Ovary (tissue), 10 donors: ENCODE measurements at regions of chrX and their contacts with region 1.

Region 1: DNA sequence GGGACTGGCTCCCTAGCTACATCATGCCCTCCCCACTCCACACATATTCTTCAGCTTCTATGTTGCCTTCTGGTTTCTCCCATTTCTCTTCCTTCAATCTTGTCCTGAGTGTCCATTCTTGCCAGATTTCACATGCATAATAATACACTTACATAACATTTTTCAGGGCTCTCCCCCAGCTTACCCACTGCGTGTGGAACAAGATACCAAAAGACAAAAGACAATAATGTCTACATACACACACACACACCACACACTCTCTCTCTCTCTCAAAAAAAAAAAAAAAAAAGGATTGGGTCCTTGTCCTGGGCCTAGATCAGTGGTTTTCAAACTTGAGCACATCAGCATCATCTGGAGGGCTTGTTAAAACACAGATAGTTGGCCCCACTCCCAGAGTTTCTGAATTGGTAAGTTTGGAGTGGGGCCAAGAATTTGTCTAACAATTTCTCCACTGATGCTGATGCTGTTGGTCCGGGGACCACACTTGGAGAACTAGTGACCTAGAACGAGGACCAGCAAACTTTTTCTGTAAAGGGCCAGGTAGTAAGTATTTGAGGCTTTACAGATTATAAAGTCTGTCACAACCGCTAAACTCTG is 6.5 kb upstream of the SMARCA1 start:
- DNase-seq: peak in 1 of 5 donors; percentile 19
- H3K4me3 ChIP-seq: no peak overlapping the region
- H3K27ac ChIP-seq: no peak overlapping the region
- H3K4me1 ChIP-seq: peaks cover 4% of the 10 kb centered on the region
- H3K27me3 ChIP-seq: no peaks in the 10 kb centered on the region
- CTCF ChIP-seq: no peak
- EP300 ChIP-seq: no peak
- POLR2A ChIP-seq: no peak

Region 2: DNA sequence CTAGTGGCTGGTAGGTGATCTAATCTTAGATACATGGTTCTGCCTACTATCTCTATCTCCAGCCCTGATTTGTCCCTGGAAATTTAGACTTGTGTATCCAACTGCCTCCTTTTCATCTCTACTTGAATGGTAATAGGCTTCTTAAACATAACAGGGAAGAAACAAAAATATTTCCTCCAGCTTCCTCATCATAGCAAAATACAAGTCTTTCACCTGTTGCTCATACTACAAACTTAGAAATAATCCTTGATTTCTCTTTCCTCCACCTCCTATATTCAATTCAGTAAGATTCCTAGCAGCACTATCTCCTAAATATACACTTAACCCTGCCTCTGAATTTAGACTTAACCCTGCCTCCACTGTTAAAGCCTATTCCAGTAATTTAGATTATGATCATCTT is 1104.2 kb before region 1 on chrX:
- intact Hi-C with region 1: no loop called
- DNase-seq: no peak
- H3K4me3 ChIP-seq: no peak overlapping the region
- H3K27ac ChIP-seq: no peak overlapping the region
- H3K4me1 ChIP-seq: no peaks in the 10 kb centered on the region
- H3K27me3 ChIP-seq: no peaks in the 10 kb centered on the region
- CTCF ChIP-seq: no peak
- EP300 ChIP-seq: no peak
- POLR2A ChIP-seq: no peak

Region 3: GRCh38 chrX:129593137-129593536 is 63.4 kb after region 1 on chrX:
- intact Hi-C with region 1: loop called in 1 of 4 experiments (anchors 10 kb)
- DNase-seq: peak in 2 of 5 donors; percentile 34 to 52
- H3K4me3 ChIP-seq: no peak overlapping the region
- H3K27ac ChIP-seq: peak overlapping the region in 1 of 2 donors; percentile 6
- H3K4me1 ChIP-seq: peaks cover 4% of the 10 kb centered on the region
- H3K27me3 ChIP-seq: no peaks in the 10 kb centered on the region
- CTCF ChIP-seq: no peak
- EP300 ChIP-seq: no peak
- POLR2A ChIP-seq: no peak

Region 4: GRCh38 chrX:129737916-129738315 is 208.1 kb after region 1 on chrX:
- intact Hi-C with region 1: no loop called
- DNase-seq: no peak
- H3K4me3 ChIP-seq: no peak overlapping the region
- H3K27ac ChIP-seq: peak overlapping the region in 1 of 2 donors; percentile 4
- H3K4me1 ChIP-seq: no peaks in the 10 kb centered on the region
- H3K27me3 ChIP-seq: no peaks in the 10 kb centered on the region
- CTCF ChIP-seq: no peak
- EP300 ChIP-seq: no peak
- POLR2A ChIP-seq: no peak